IMR-90 (cell line): ENCODE measurements at regions of chr2 and their contacts with region 1.

Region 1: GRCh38 chr2:85243101-85244072 is 84.4 kb downstream of the TGOLN2 start:
- DNase-seq: no peak
- ATAC-seq: no peak
- H3K4me3 ChIP-seq: no peak overlapping the region
- H3K27ac ChIP-seq: no peak overlapping the region
- H3K4me1 ChIP-seq: peaks cover 7% of the 10 kb centered on the region
- H3K27me3 ChIP-seq: no peaks in the 10 kb centered on the region
- CTCF ChIP-seq: peak; percentile 31
- POLR2A ChIP-seq: no peak
- RAD21 ChIP-seq: 0 out of 2 replicates have a peak, but pooled peaks have one; percentile 25

Region 2: GRCh38 chr2:85215448-85216401 is 27.7 kb before region 1 on chr2:
- CTCF ChIA-PET with region 1: interaction called, 11 read pairs
- POLR2A ChIA-PET with region 1: no interaction called
- dilution Hi-C with region 1: no loop called
- in situ Hi-C with region 1: no loop called
- intact Hi-C with region 1: no loop called
- DNase-seq: peak; percentile 93
- ATAC-seq: peak; percentile 95
- H3K4me3 ChIP-seq: no peak overlapping the region
- H3K27ac ChIP-seq: peak overlapping the region; percentile 75; the same call in 1 of the 2 replicates
- H3K4me1 ChIP-seq: peaks cover 22% of the 10 kb centered on the region
- H3K27me3 ChIP-seq: no peaks in the 10 kb centered on the region
- CTCF ChIP-seq: no peak
- POLR2A ChIP-seq: no peak
- RAD21 ChIP-seq: 0 out of 2 replicates have a peak, but pooled peaks have one; percentile 6